CD4-positive, alpha-beta memory T cell (primary cell): ENCODE measurements at regions of chr1 and their contacts with region 1.

Region 1: DNA sequence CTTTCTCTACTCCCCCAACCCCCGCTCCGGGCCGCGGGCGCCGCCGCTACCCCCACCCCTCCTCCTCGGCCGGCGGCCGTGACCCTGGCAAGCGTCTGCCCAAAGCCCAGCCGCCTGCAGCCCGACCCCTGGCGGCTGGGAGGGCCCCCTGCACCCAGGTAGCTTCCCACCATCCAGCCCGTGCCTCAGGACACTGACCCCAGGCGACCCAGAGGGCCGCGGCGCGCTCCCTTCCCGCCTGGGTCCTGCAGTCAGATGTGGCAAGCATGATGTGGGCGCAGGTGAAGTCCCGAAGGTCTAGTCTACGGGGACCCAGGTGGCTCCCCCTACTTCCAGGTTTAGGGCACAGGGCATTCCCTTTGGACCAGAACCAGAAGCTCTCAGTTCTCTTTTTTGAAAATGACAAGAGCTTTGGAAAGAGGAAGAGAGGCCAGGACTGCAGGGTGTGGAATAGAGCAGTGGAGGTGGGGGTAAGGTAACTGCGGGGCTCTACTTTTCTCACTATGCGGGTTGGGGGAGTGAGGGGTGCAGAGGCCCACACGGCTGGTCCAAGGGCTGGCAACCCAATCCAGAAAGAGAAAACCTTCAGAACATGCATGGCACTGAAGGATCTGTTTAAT is at the start of gene DENND4B:
- DNase-seq: peak; percentile 69 to 79 (median 74)
- H3K4me3 ChIP-seq: peak within 1 kb of the TSS; percentile 47 to 72
- H3K4me3 Mint-ChIP-seq: peak within 1 kb of the TSS; percentile 89 to 99 (median 96)
- H3K27ac ChIP-seq: peak within 1 kb of the TSS; percentile 83
- H3K27ac Mint-ChIP-seq: peak within 1 kb of the TSS; percentile 96 to 98 (median 98)
- H3K4me1 ChIP-seq: peaks cover 35% of the 10 kb centered on the region
- H3K4me1 Mint-ChIP-seq: peaks cover 18 to 45% (median 30%) of the 10 kb centered on the region in 4 donors
- H3K27me3 ChIP-seq: no peaks in the 10 kb centered on the region
- H3K27me3 Mint-ChIP-seq: peaks cover 0 to 4% of the 10 kb centered on the region in 2 donors
- total RNA-seq, gene DENND4B: 211 to 216 TPM

Region 2: GRCh38 chr1:153775458-153776327 is 171.0 kb before region 1 on chr1:
- CTCF ChIA-PET with region 1: no interaction called
- POLR2A ChIA-PET with region 1: interaction called, 11 read pairs
- intact Hi-C with region 1: no loop called
- DNase-seq: peak; percentile 53 to 69 (median 57)
- H3K4me3 ChIP-seq: peak overlapping the region; percentile 47 to 71
- H3K4me3 Mint-ChIP-seq: peak overlapping the region; percentile 81 to 88 (median 84)
- H3K27ac ChIP-seq: peak overlapping the region; percentile 47
- H3K27ac Mint-ChIP-seq: peak overlapping the region; percentile 22 to 90 (median 68)
- H3K4me1 ChIP-seq: peaks cover 20% of the 10 kb centered on the region
- H3K4me1 Mint-ChIP-seq: peaks cover 12 to 31% (median 15%) of the 10 kb centered on the region in 4 donors
- H3K27me3 ChIP-seq: no peaks in the 10 kb centered on the region
- H3K27me3 Mint-ChIP-seq: no peaks in the 10 kb centered on the region

Region 3: DNA sequence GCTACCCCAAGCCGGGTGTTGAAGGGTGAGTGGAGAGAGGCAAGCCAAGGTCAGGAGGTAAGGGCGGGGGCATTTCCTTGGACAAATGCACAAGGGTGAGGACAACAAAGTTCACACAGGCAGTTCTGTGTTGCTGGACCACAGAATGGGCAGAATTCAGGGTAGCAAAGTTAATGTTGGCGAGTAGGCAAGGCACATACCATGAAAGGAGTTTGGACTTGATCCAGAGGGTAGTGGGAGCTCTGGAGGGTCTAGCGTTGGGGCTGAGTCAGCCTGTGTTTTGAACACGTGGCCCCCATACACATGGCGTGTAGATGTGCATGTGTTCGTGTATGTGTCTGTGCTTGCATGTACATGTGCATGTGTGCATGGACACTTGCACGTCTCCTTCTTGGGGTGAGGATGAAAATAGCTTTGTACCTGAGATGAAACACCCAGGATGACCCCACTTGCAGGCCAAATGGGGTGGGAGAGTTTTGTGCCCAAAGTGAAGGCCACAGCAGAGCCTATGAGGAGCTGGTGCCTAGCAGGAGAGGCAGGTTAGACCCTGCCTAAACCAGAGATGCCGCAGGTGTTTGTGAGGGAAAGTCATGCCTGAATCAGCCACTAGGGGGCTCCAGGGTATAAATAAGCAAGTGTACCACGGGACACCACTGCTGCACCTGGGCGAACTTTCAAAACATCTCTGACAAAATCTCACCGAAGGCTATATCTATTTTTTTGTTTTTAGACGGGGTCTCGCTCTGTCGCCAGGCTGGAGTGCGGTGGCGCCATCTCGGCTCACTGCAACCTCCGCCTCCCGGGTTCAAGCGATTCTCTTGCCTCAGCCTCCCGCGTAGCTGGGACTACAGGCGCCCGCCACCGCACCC is 149.7 kb before region 1 on chr1:
- CTCF ChIA-PET with region 1: interaction called, 24 read pairs
- POLR2A ChIA-PET with region 1: interaction called, 17 read pairs
- intact Hi-C with region 1: loop called (anchors 1 kb)
- DNase-seq: peak; percentile 76 to 85 (median 80)
- H3K4me3 ChIP-seq: no peak overlapping the region
- H3K4me3 Mint-ChIP-seq: no peak overlapping the region
- H3K27ac ChIP-seq: no peak overlapping the region
- H3K27ac Mint-ChIP-seq: peak overlapping the region; percentile 8 to 79 (median 65)
- H3K4me1 ChIP-seq: no peaks in the 10 kb centered on the region
- H3K4me1 Mint-ChIP-seq: peaks cover 0 to 16% (median 8%) of the 10 kb centered on the region in 4 donors
- H3K27me3 ChIP-seq: no peaks in the 10 kb centered on the region
- H3K27me3 Mint-ChIP-seq: no peaks in the 10 kb centered on the region

Region 4: GRCh38 chr1:153827168-153827964 is 119.4 kb before region 1 on chr1:
- CTCF ChIA-PET with region 1: interaction called, 12 read pairs
- POLR2A ChIA-PET with region 1: no interaction called
- intact Hi-C with region 1: no loop called
- DNase-seq: no peak
- H3K4me3 ChIP-seq: no peak overlapping the region
- H3K4me3 Mint-ChIP-seq: no peak overlapping the region
- H3K27ac ChIP-seq: no peak overlapping the region
- H3K27ac Mint-ChIP-seq: peak overlapping the region in 1 of 7 donors; percentile 41
- H3K4me1 ChIP-seq: no peaks in the 10 kb centered on the region
- H3K4me1 Mint-ChIP-seq: peaks cover 0 to 6% (median 0%) of the 10 kb centered on the region in 4 donors
- H3K27me3 ChIP-seq: no peaks in the 10 kb centered on the region
- H3K27me3 Mint-ChIP-seq: no peaks in the 10 kb centered on the region

Region 5: GRCh38 chr1:153928791-153929341 is 17.9 kb before region 1 on chr1:
- CTCF ChIA-PET with region 1: interaction called, 69 read pairs
- POLR2A ChIA-PET with region 1: interaction called, 298 read pairs
- intact Hi-C with region 1: no loop called
- DNase-seq: no peak
- H3K4me3 ChIP-seq: no peak overlapping the region
- H3K4me3 Mint-ChIP-seq: no peak overlapping the region
- H3K27ac ChIP-seq: no peak overlapping the region
- H3K27ac Mint-ChIP-seq: peak overlapping the region in 2 of 7 donors; percentile 24 to 25
- H3K4me1 ChIP-seq: peaks cover 7% of the 10 kb centered on the region
- H3K4me1 Mint-ChIP-seq: peaks cover under 1 to 14% (median 9%) of the 10 kb centered on the region in 4 donors
- H3K27me3 ChIP-seq: no peaks in the 10 kb centered on the region
- H3K27me3 Mint-ChIP-seq: no peaks in the 10 kb centered on the region

Region 6: DNA sequence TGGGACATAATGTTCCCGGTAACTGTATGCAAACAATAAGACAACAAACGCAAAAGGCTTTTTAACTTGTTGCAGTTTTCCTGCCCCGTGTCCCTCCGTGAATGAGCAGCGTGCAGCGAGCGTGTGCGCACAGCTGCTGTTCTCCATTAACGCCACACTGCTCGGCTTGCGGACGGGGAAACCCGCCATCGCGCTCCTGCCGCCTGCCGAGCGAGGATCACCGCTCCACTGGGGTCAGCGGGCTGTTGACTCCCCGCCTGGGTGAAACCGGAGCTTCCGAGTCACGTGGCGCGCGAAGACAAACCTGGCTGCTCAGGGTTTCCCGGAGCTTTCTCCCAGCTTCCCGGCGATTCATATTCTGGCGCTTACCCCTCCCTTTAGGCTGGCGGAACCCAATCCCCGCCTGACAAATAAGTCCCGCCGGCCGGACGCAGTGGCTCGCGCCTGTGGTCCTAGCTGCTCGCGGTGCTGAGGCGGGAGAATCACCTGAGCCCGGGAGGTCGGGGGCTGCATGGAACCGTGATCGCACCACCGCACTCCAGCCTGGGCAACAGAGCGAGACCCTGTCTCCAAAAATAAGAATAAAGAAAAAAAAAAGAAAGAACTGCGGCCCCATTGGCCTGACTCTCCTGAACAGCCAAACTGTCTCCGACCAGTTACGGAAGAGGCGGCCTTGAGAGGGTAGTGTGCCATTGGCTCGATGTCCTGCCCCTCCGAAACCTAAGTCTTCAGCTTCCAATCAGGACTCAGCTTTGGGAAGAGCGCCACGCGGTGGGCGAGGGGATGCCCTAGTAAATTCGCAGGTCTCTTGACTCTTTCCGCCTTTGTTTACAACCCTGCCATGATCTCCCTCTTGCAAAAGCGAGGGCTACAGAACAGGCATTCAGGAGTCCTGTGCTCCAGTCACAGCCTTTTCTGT is 20.6 kb after region 1 on chr1 and contains the start of gene CREB3L4:
- CTCF ChIA-PET with region 1: interaction called, 42 read pairs
- POLR2A ChIA-PET with region 1: interaction called, 123 read pairs
- intact Hi-C with region 1: loop called (anchors 1 kb)
- DNase-seq: peak; percentile 82 to 91 (median 87)
- H3K4me3 ChIP-seq: peak within 1 kb of the TSS; percentile 45 to 66
- H3K4me3 Mint-ChIP-seq: peak within 1 kb of the TSS; percentile 86 to 97 (median 92)
- H3K27ac ChIP-seq: peak within 1 kb of the TSS; percentile 89
- H3K27ac Mint-ChIP-seq: peak within 1 kb of the TSS; percentile 95 to 99 (median 96)
- H3K4me1 ChIP-seq: peaks cover 46% of the 10 kb centered on the region
- H3K4me1 Mint-ChIP-seq: peaks cover 29 to 60% (median 47%) of the 10 kb centered on the region in 4 donors
- H3K27me3 ChIP-seq: no peaks in the 10 kb centered on the region
- H3K27me3 Mint-ChIP-seq: no peaks in the 10 kb centered on the region
- total RNA-seq, gene CREB3L4: 7.4 to 9.8 TPM